ENCODE measurements at regions of chr6 and their contacts with region 1.

Region 1: DNA sequence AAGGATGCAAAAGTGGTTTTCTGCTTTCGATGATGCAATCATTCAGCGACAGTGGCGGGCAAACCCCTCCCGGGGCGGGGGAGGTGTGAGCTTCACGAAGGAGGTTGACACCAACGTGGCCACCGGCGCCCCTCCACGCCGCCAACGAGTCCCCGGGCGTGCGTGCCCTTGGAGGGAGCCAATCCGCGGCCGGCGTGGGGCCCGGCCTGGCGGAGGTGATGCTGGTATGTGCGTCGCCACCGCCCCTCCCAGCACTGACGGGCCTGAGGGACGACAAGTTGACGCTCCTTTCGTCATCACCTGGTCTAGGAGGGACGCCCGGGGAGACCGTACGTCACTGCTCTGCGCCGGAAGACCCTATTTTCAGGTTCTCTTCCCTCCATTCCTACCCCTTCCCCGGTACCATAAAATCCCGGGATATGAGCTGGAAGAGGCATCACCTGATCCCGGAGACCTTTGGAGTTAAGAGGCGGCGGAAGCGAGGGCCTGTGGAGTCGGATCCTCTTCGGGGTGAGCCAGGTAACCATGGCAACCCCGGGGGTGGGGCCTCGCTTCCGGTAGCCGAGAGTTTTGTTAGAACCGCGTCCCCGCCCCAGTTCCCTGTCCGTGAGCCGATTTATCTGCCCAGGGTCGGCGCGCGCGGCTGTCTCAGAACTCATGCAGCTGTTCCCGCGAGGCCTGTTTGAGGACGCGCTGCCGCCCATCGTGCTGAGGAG is at the start of gene DXO:
- DNase-seq: peak; percentile 97 to 99 (median 99)
- H3K4me3 ChIP-seq: peak within 1 kb of the TSS; percentile 75 to 85 (median 80)
- H3K4me3 Mint-ChIP-seq: peak within 1 kb of the TSS; percentile 92 to 96
- H3K27ac ChIP-seq: peak within 1 kb of the TSS; percentile 88 to 99
- H3K27ac Mint-ChIP-seq: peak within 1 kb of the TSS; percentile 99 to 100 (median 100)
- H3K4me1 ChIP-seq: peaks cover 20 to 26% of the 10 kb centered on the region in 2 donors
- H3K4me1 Mint-ChIP-seq: peaks cover 29% of the 10 kb centered on the region
- H3K27me3 ChIP-seq: no peaks in the 10 kb centered on the region
- H3K27me3 Mint-ChIP-seq: peaks cover 0 to 2% (median 0%) of the 10 kb centered on the region in 3 donors
- CTCF ChIP-seq: no peak
- polyA plus RNA-seq, gene DXO: 5.5 to 49.6 (median 10.4) TPM

Region 2: GRCh38 chr6:31729515-31729978 is 242.6 kb before region 1 on chr6:
- intact Hi-C with region 1: no loop called
- DNase-seq: peak; percentile 75 to 83 (median 78)
- H3K4me3 ChIP-seq: peak overlapping the region; percentile 68 to 87 (median 81)
- H3K4me3 Mint-ChIP-seq: peak overlapping the region; percentile 96
- H3K27ac ChIP-seq: peak overlapping the region; percentile 94 to 96
- H3K27ac Mint-ChIP-seq: peak overlapping the region; percentile 96 to 99 (median 98)
- H3K4me1 ChIP-seq: peaks cover 76 to 90% of the 10 kb centered on the region in 2 donors
- H3K4me1 Mint-ChIP-seq: peaks cover 73% of the 10 kb centered on the region
- H3K27me3 ChIP-seq: no peaks in the 10 kb centered on the region
- H3K27me3 Mint-ChIP-seq: peaks cover 0 to 4% (median 4%) of the 10 kb centered on the region in 3 donors
- CTCF ChIP-seq: peak; percentile 80

Region 3: GRCh38 chr6:31958741-31959739 is 13.1 kb before region 1 on chr6 and contains the starts of genes NELFE and SKIC2:
- intact Hi-C with region 1: loop called in 1 of 2 experiments (anchors 1 kb)
- DNase-seq: peak; percentile 99
- H3K4me3 ChIP-seq: peak within 1 kb of the TSS; percentile 91 to 100 (median 93)
- H3K4me3 Mint-ChIP-seq: peak within 1 kb of the TSS; percentile 91 to 97
- H3K27ac ChIP-seq: peak within 1 kb of the TSS; percentile 79 to 99
- H3K27ac Mint-ChIP-seq: peak within 1 kb of the TSS; percentile 97 to 99 (median 99)
- H3K4me1 ChIP-seq: peaks cover 17 to 22% of the 10 kb centered on the region in 2 donors
- H3K4me1 Mint-ChIP-seq: peaks cover 22% of the 10 kb centered on the region
- H3K27me3 ChIP-seq: no peaks in the 10 kb centered on the region
- H3K27me3 Mint-ChIP-seq: no peaks in the 10 kb centered on the region
- CTCF ChIP-seq: no peak
- polyA plus RNA-seq, gene NELFE: 48.8 to 74.4 (median 61.4) TPM
- polyA plus RNA-seq, gene SKIC2: 13.2 to 72.1 (median 13.2) TPM

Region 4: DNA sequence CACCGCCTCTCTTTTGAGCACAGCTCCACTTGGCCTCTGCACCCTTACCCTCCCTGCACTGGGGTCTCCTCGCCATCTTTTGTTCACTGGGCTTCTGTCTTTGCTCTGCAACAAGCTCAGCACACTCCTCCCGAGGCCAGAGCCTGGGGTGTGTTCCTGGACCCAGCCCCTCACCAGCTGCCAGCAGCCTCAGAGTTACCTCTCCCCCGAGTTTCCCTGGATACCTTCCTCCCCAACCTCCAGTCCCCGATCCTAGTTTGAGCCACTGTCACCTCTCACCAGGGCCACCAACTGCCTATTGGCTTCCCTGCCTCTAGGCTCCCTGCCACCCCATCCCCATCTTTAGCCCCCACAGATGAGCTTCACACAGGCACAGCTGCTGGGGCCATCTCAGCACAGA is 78.4 kb after region 1 on chr6:
- intact Hi-C with region 1: no loop called
- DNase-seq: no peak
- H3K4me3 ChIP-seq: no peak overlapping the region
- H3K4me3 Mint-ChIP-seq: no peak overlapping the region
- H3K27ac ChIP-seq: no peak overlapping the region
- H3K27ac Mint-ChIP-seq: no peak overlapping the region
- H3K4me1 ChIP-seq: no peaks in the 10 kb centered on the region
- H3K4me1 Mint-ChIP-seq: peaks cover 4% of the 10 kb centered on the region
- H3K27me3 ChIP-seq: no peaks in the 10 kb centered on the region
- H3K27me3 Mint-ChIP-seq: peaks cover 2 to 7% (median 5%) of the 10 kb centered on the region in 3 donors
- CTCF ChIP-seq: no peak

Measured in CD14-positive monocyte (primary cell).